HAP-1 (cell line): ENCODE measurements at regions of chr17 and their contacts with region 1.

Region 1: GRCh38 chr17:28252436-28252835 is 66.6 kb upstream of the TMEM97 start:
- DNase-seq: no peak
- H3K4me3 ChIP-seq: no peak overlapping the region
- H3K4me1 ChIP-seq: no peaks in the 10 kb centered on the region; the same call in 1 of the 2 replicates
- H3K27me3 ChIP-seq: no peaks in the 10 kb centered on the region

Region 2: GRCh38 chr17:27892866-27893769 is 359.3 kb before region 1 on chr17 and contains the start of gene LYRM9:
- in situ Hi-C with region 1: loop called (anchors 10 kb)
- DNase-seq: peak; percentile 80 to 93
- H3K4me3 ChIP-seq: peak within 1 kb of the TSS; percentile 46
- H3K4me1 ChIP-seq: peaks cover 24% of the 10 kb centered on the region
- H3K27me3 ChIP-seq: no peaks in the 10 kb centered on the region